Endothelial cell of umbilical vein (primary cell): ENCODE measurements at regions of chr2 and their contacts with region 1.

Region 1: GRCh38 chr2:102355526-102356380 is at the start of gene IL18R1:
- DNase-seq: peak; percentile 71
- H3K4me3 ChIP-seq: peak within 1 kb of the TSS; percentile 70 to 88 (median 79)
- H3K27ac ChIP-seq: peak within 1 kb of the TSS; percentile 63
- H3K4me1 ChIP-seq: peaks cover 13% of the 10 kb centered on the region
- H3K27me3 ChIP-seq: no peaks in the 10 kb centered on the region
- CTCF ChIP-seq: peak; percentile 72 to 84
- POLR2A ChIP-seq: no peak
- total RNA-seq, gene IL18R1: 3.6 and 4.0 TPM in 2 replicates

Region 2: DNA sequence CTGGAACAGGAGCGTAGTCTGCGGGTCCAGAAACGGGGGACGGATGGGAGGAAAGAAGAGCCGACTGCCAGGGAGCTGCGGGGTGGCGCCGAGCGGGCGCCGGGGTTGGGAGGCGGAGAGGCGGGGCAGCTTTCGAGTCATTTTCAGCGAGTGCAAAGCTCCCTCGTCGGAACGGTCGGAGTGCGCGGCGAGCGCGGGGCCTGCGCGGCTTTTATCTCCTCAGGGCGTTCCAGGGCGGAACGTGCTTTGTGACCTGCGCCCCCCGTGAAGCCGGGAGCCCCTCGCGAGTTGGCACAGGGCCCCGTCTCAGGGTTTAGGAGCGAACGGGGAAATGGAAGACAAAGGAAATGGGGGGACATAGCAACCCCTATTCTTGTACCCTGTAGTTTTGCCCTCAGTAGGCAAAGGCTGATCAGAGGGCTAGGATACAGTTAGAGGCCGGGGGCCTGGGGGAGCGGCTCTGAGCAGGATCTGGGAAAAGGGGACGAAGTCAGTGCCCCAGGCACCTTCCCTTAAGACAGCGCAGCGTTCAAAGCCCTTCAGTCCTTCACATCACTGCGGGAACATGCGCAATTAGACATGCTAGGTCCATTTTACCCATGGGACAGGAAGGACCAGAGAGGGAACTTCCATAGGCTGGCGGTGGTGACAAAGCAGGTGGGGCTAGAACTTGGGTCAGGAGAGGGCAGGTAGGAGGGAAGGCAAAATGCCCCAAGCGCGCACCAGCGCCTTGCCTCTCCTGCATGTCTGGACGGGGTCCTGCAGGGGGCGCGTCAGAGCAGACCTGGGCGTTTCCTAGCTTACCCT is 104.5 kb before region 1 on chr2:
- CTCF ChIA-PET with region 1: interaction called, 26 read pairs
- POLR2A ChIA-PET with region 1: no interaction called
- dilution Hi-C with region 1: no loop called
- intact Hi-C with region 1: loop called (anchors 1 kb)
- DNase-seq: peak; percentile 23
- H3K4me3 ChIP-seq: peak overlapping the region in 2 of 3 experiments; percentile 36 to 42
- H3K27ac ChIP-seq: no peak overlapping the region
- H3K4me1 ChIP-seq: peaks cover 8% of the 10 kb centered on the region
- H3K27me3 ChIP-seq: no peaks in the 10 kb centered on the region
- CTCF ChIP-seq: peak in 1 of 2 donors; percentile 34
- POLR2A ChIP-seq: no peak

Region 3: GRCh38 chr2:102551329-102552096 is 195.8 kb after region 1 on chr2:
- CTCF ChIA-PET with region 1: no interaction called
- POLR2A ChIA-PET with region 1: no interaction called
- dilution Hi-C with region 1: no loop called
- intact Hi-C with region 1: no loop called
- DNase-seq: no peak
- H3K4me3 ChIP-seq: no peak overlapping the region
- H3K27ac ChIP-seq: no peak overlapping the region
- H3K4me1 ChIP-seq: no peaks in the 10 kb centered on the region
- H3K27me3 ChIP-seq: no peaks in the 10 kb centered on the region
- CTCF ChIP-seq: no peak
- POLR2A ChIP-seq: no peak